Common myeloid progenitor, CD34-positive (primary cell): ENCODE measurements at regions of chr1 and their contacts with region 1.

Region 1: DNA sequence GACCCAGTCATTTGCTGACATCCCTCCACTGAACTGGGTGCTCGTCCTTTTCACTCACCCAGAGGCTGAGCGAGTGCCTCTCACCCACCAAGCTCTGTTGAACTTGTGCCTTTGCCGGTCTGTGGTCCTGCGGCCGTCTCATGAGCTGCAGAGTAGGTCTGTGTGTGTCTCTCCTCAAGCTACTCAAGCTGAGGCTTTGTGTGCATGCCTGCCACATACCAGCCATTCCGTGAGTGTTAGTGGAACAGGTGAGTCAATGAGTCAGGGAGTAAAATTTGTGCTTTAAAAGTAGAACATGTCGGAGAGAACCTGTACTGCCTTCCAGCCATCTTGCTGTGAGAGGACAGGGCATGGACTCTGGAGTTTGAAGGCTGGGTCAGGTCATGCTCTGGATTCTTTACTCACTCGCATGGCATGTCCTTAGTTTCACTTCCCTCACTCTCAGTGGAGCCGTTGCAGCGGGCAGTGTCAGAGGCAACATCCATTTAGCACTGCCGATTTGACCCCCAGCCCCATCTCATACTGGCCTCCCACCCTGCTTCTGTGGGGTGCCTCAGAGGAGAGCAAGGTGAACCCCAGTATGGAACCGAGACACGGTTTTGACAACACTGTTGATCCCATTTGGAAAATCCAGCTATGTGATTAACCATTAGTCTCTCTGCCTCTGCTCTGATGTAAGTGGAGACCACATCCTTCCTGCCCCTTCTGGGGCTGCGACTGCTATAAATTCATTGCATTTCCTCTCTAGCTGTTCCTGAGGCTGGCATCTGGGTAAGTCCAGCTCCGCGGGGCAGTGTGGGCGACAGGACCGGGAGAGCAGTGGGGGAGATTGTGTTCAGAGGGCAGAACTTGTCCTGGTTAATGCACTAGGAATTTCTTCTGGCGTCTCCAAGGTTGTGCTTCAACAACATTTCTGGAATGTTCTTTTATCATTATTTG is at the start of gene NLRP3:
- DNase-seq: peak; percentile 85 to 93 (median 90)
- H3K4me3 ChIP-seq: peak within 1 kb of the TSS; percentile 55 to 92 (median 78)
- H3K27ac ChIP-seq: peak within 1 kb of the TSS; percentile 71 to 73
- H3K4me1 ChIP-seq: peaks cover 25 to 62% (median 56%) of the 10 kb centered on the region in 4 experiments
- H3K27me3 ChIP-seq: no peaks in the 10 kb centered on the region

Region 2: GRCh38 chr1:247431643-247432042 is 16.0 kb after region 1 on chr1:
- CTCF ChIA-PET with region 1: interaction called, 16 read pairs
- POLR2A ChIA-PET with region 1: interaction called, 4 read pairs
- DNase-seq: peak in 2 of 3 donors; percentile 36 to 37
- H3K4me3 ChIP-seq: no peak overlapping the region
- H3K27ac ChIP-seq: no peak overlapping the region
- H3K4me1 ChIP-seq: peaks cover 0 to 7% (median 0%) of the 10 kb centered on the region in 4 experiments
- H3K27me3 ChIP-seq: no peaks in the 10 kb centered on the region

Region 3: DNA sequence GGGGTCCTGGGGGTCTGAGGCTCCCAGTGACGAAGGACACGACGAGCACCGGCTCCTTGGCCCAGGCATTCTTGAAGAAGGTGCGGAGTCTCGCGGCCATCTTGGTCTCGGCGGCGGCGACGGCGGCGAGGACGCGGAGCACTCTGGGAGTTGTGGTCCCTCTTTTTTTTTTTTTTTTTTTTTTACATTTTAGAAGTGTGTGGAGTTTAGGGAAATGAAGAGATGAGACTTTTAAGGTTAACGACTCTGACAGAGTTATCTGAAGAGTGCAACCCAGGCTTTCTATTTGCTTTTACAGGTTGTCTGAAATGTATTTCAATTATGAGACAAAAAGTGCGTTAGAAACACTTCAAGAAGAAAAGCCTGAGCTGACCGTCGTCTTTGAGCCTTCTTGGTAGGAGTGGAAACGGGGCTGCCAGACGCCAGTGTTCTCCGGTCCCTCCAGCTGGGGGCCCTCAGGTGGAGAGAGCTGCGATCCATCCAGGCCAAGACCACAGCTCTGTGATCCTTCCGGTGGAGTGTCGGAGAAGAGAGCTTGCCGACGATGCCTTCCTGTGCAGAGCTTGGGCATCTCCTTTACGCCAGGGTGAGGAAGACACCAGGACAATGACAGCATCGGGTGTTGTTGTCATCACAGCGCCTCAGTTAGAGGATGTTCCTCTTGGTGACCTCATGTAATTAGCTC is 32.6 kb after region 1 on chr1:
- CTCF ChIA-PET with region 1: no interaction called
- POLR2A ChIA-PET with region 1: no interaction called
- DNase-seq: peak; percentile 28 to 71 (median 61)
- H3K4me3 ChIP-seq: peak overlapping the region in 4 of 7 experiments; percentile 24 to 73 (median 60)
- H3K27ac ChIP-seq: peak overlapping the region; percentile 47 to 71
- H3K4me1 ChIP-seq: peaks cover 0 to 5% (median 1%) of the 10 kb centered on the region in 4 experiments
- H3K27me3 ChIP-seq: no peaks in the 10 kb centered on the region